HCT116 (cell line): ENCODE measurements at regions of chr11 and their contacts with region 1.

Region 1: GRCh38 chr11:65477149-65477965 is 21.5 kb upstream of the MALAT1 start:
- DNase-seq: no peak
- ATAC-seq: peak; percentile 78
- H3K4me3 ChIP-seq: peak overlapping the region; percentile 86
- H3K27ac ChIP-seq: peak overlapping the region; percentile 97
- H3K4me1 ChIP-seq: peaks cover 74 to 89% of the 10 kb centered on the region in 2 experiments
- H3K27me3 ChIP-seq: no peaks in the 10 kb centered on the region
- CTCF ChIP-seq: no peak
- POLR2A ChIP-seq: peak; percentile 53
- RAD21 ChIP-seq: no peak

Region 2: DNA sequence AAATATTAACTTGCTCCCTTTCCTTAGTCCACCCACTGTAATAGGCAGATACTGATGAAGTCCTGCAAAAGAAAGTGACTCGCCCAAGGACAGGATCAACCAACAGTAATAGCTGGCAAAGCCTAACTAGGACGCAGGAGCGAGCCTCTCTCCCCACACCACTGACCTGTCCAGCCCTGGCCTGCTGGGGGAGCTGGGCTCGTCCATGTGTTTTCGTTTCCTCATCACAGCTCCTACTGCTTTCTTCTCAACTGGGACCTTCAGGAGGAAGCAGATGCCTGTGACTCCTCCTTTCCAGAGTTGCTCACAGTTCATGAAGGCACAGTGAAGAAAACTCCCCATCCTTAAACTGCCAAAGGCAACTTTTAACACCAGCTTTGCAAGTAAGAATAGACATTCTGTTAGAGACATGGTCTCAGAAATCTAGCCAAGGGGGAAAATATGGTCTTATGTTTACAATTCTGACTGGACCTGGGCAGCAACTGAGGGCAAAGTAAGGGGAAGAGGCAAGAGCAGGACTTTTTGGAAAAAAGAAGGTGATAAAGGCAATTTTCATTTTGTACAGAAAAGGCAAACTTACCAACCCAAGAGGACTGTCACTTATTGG is 530.0 kb before region 1 on chr11:
- CTCF ChIA-PET with region 1: no interaction called
- POLR2A ChIA-PET with region 1: no interaction called
- RAD21 ChIA-PET with region 1: no interaction called
- intact Hi-C with region 1: no loop called
- DNase-seq: no peak
- ATAC-seq: 0 out of 2 replicates have a peak, but pooled peaks have one; percentile 30
- H3K4me3 ChIP-seq: no peak overlapping the region
- H3K27ac ChIP-seq: no peak overlapping the region
- H3K4me1 ChIP-seq: no peaks in the 10 kb centered on the region
- H3K27me3 ChIP-seq: no peaks in the 10 kb centered on the region
- CTCF ChIP-seq: no peak
- POLR2A ChIP-seq: no peak
- RAD21 ChIP-seq: no peak

Region 3: GRCh38 chr11:65236194-65237059 is 240.9 kb before region 1 on chr11:
- CTCF ChIA-PET with region 1: no interaction called
- POLR2A ChIA-PET with region 1: no interaction called
- RAD21 ChIA-PET with region 1: no interaction called
- intact Hi-C with region 1: no loop called
- DNase-seq: no peak
- ATAC-seq: no peak
- H3K4me3 ChIP-seq: no peak overlapping the region
- H3K27ac ChIP-seq: no peak overlapping the region
- H3K4me1 ChIP-seq: peaks cover 0 to 9% of the 10 kb centered on the region in 2 experiments; a peak in 2 of 4 replicates
- H3K27me3 ChIP-seq: no peaks in the 10 kb centered on the region
- CTCF ChIP-seq: no peak
- POLR2A ChIP-seq: no peak
- RAD21 ChIP-seq: no peak

Region 4: GRCh38 chr11:65340226-65340625 is 137.1 kb before region 1 on chr11:
- CTCF ChIA-PET with region 1: no interaction called
- POLR2A ChIA-PET with region 1: no interaction called
- RAD21 ChIA-PET with region 1: no interaction called
- intact Hi-C with region 1: no loop called
- DNase-seq: no peak
- ATAC-seq: no peak
- H3K4me3 ChIP-seq: no peak overlapping the region
- H3K27ac ChIP-seq: no peak overlapping the region
- H3K4me1 ChIP-seq: peaks cover 3% of the 10 kb centered on the region in 2 experiments; a peak in 3 of 4 replicates
- H3K27me3 ChIP-seq: no peaks in the 10 kb centered on the region
- CTCF ChIP-seq: no peak
- POLR2A ChIP-seq: no peak
- RAD21 ChIP-seq: no peak

Region 5: GRCh38 chr11:65418711-65419459 is 58.5 kb before region 1 on chr11:
- CTCF ChIA-PET with region 1: interaction called, 15 read pairs
- POLR2A ChIA-PET with region 1: interaction called, 116 read pairs
- RAD21 ChIA-PET with region 1: no interaction called
- intact Hi-C with region 1: no loop called
- DNase-seq: peak; percentile 84
- ATAC-seq: peak; percentile 59
- H3K4me3 ChIP-seq: peak overlapping the region; percentile 40 to 56
- H3K27ac ChIP-seq: peak overlapping the region; percentile 100
- H3K4me1 ChIP-seq: peaks cover 53 to 84% of the 10 kb centered on the region in 2 experiments
- H3K27me3 ChIP-seq: no peaks in the 10 kb centered on the region
- CTCF ChIP-seq: no peak
- POLR2A ChIP-seq: peak; percentile 87
- RAD21 ChIP-seq: no peak

Region 6: GRCh38 chr11:65487413-65488272 is 10.3 kb after region 1 on chr11:
- CTCF ChIA-PET with region 1: interaction called, 12 read pairs
- POLR2A ChIA-PET with region 1: interaction called, 1,499 read pairs
- RAD21 ChIA-PET with region 1: interaction called, 3 to 4 read pairs
- intact Hi-C with region 1: no loop called
- DNase-seq: peak; percentile 99
- ATAC-seq: peak; percentile 71
- H3K4me3 ChIP-seq: peak overlapping the region; percentile 10 to 27
- H3K27ac ChIP-seq: peak overlapping the region; percentile 98
- H3K4me1 ChIP-seq: peaks cover 84 to 88% of the 10 kb centered on the region in 2 experiments
- H3K27me3 ChIP-seq: no peaks in the 10 kb centered on the region
- CTCF ChIP-seq: no peak; a peak in 1 of 6 replicates
- POLR2A ChIP-seq: no peak
- RAD21 ChIP-seq: no peak

Region 7: DNA sequence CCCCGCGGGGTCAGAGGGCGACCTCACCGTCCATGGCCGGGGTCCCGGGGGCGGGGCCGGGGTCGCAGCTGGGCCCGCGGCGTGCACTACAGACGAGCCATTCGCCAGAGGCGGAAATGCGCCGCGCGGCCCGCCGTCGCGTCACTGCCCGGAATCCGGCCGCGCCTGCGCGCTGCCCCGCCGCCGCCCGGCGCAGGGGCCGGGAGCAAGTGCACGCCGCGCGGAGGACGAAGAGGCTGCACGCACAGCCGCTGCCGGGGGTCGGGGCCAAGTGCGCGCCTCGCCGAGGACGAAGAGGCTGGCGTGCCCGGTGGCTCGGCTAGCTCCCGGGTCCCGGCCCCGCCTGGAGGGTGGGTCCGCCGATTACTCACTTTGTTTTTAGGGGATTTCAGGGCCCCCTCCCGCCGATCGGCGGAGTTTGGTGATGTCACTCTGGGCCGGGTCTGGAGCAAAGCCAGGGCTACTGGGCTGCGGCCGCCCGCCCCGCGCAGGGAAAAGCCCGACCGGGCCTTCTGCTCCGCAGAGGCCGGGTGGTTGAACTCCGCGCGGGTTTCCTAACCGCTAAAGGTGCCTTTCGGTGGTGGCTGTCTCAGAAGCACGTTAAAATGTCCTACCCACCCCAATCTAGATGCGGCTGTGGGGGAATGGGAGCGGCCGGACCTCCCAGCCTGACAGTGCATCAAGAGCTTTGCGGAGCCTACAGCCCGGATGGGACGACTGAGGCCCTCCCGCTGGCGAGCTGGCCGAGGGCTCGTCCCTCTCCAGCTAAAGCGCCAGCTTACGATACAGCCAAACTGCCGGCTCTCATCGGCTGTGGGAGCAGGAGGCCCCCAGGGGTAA is 185.7 kb after region 1 on chr11 and contains the start of gene RELA:
- CTCF ChIA-PET with region 1: no interaction called
- POLR2A ChIA-PET with region 1: no interaction called
- RAD21 ChIA-PET with region 1: no interaction called
- intact Hi-C with region 1: no loop called
- DNase-seq: peak; percentile 84
- ATAC-seq: peak; percentile 88
- H3K4me3 ChIP-seq: peak within 1 kb of the TSS; percentile 86 to 100
- H3K27ac ChIP-seq: peak within 1 kb of the TSS; percentile 95
- H3K4me1 ChIP-seq: peaks cover 17 to 24% of the 10 kb centered on the region in 2 experiments
- H3K27me3 ChIP-seq: no peaks in the 10 kb centered on the region
- CTCF ChIP-seq: no peak
- POLR2A ChIP-seq: peak; percentile 82
- RAD21 ChIP-seq: no peak
- total RNA-seq, gene RELA: 78.5 TPM